A549 (cell line): ENCODE measurements at regions of chr2 and their contacts with region 1.

Region 1: DNA sequence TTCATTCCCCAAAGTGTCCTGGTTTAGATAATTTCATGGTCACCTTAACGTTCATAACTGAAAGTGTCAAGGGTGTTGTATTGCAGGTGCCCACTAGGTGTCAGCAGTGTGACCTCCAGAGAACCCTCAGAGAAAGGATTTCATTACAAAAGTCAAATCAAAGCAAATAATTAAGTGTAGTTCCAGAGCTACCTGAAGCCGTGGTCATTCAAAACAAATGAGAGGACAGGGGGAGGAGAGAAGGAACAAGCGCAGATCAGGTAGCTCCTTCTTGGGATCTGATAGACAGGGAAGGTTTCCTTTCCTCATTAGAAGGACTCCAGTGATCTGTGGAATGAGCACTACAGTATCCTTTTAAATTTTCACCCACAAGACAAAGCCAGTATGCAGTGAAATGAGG is at the start of gene SLC9A4:
- DNase-seq: peak; percentile 8 to 51
- ATAC-seq: peak; percentile 66 to 75; a peak in 4 of 6 replicates
- H3K4me3 ChIP-seq: no peak within 1 kb of the TSS
- H3K27ac ChIP-seq: no peak within 1 kb of the TSS
- H3K4me1 ChIP-seq: no peaks in the 10 kb centered on the region
- CTCF ChIP-seq: peak; percentile 89
- EP300 ChIP-seq: no peak
- POLR2A ChIP-seq: no peak
- RAD21 ChIP-seq: peak; percentile 80 to 81
- polyA plus RNA-seq, gene SLC9A4: not detected in 2 replicates

Region 2: DNA sequence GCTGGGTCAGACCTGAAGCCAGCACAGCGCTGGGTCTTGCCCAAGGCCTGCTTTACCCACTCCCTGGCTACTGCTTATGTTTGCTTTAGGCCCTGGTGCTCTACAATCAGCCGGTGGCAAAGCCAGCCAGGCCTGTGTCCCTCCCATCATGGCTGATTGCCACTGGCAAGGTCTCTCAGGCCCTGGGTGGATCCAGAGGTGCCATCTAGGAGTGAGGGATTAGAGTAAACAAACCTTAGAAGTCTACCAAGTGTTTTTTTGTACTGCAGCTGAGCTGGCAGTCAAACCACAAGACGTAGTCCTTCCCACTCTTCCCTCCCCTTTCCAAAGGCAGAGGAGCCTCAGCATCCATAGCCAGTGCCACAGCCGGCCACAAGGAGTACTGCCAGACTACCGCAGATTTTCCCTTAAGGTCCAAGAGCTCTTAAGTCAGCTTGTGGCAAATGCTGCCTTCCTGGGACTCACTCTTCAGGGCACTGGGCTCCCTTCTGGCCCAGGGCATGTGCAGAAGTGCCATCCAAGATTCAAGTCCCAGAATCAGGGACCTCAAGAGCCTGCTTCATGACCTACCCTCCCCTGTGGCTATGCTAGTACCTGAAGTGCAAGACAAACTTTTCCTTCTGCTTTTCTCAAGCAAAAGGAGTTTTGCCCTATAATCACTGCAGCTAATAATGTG is 266.2 kb before region 1 on chr2:
- CTCF ChIA-PET with region 1: no interaction called
- POLR2A ChIA-PET with region 1: no interaction called
- DNase-seq: no peak
- ATAC-seq: no peak
- H3K4me3 ChIP-seq: no peak overlapping the region
- H3K27ac ChIP-seq: no peak overlapping the region
- H3K4me1 ChIP-seq: no peaks in the 10 kb centered on the region
- CTCF ChIP-seq: no peak
- EP300 ChIP-seq: no peak
- POLR2A ChIP-seq: no peak
- RAD21 ChIP-seq: no peak

Region 3: DNA sequence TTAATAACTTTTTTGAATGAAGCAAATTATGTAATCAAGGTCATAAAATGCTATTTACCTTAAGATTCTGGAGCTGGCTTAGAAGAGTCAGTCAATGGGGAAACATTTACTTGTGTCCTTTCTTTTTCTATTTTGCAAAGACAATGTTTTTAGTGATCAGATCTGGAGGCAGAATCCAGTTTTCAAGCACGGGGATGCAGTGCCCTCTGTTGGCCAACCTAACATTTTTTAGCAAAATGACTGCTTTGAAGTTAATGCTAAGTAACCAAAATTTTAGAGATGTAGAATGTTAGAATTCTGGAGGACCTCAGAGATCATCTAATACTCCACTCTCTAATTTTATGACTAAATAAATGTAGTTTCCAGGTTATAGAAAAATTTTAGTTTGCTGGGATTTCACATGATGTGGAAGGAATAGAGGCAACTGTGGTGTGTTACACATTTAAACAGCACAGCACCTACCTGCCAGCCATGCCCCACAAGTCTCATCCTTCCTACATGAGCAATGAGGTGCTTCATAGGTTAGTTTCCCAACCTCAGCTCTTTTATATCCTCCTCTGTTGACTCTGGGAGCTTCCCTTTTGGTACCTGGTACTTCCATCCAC is 23.5 kb before region 1 on chr2:
- CTCF ChIA-PET with region 1: interaction called, 11 read pairs
- POLR2A ChIA-PET with region 1: no interaction called
- DNase-seq: peak; percentile 28 to 42
- ATAC-seq: peak in 1 of 2 experiments; percentile 66; a peak in 4 of 6 replicates
- H3K4me3 ChIP-seq: no peak overlapping the region
- H3K27ac ChIP-seq: no peak overlapping the region
- H3K4me1 ChIP-seq: no peaks in the 10 kb centered on the region
- CTCF ChIP-seq: peak; percentile 90
- EP300 ChIP-seq: no peak
- POLR2A ChIP-seq: no peak
- RAD21 ChIP-seq: peak; percentile 82 to 83

Region 4: GRCh38 chr2:102487761-102488466 is 14.9 kb after region 1 on chr2:
- CTCF ChIA-PET with region 1: interaction called, 37 read pairs
- POLR2A ChIA-PET with region 1: no interaction called
- DNase-seq: no peak
- ATAC-seq: no peak
- H3K4me3 ChIP-seq: no peak overlapping the region
- H3K27ac ChIP-seq: no peak overlapping the region
- H3K4me1 ChIP-seq: no peaks in the 10 kb centered on the region
- CTCF ChIP-seq: no peak
- EP300 ChIP-seq: no peak
- POLR2A ChIP-seq: no peak
- RAD21 ChIP-seq: no peak

Region 5: DNA sequence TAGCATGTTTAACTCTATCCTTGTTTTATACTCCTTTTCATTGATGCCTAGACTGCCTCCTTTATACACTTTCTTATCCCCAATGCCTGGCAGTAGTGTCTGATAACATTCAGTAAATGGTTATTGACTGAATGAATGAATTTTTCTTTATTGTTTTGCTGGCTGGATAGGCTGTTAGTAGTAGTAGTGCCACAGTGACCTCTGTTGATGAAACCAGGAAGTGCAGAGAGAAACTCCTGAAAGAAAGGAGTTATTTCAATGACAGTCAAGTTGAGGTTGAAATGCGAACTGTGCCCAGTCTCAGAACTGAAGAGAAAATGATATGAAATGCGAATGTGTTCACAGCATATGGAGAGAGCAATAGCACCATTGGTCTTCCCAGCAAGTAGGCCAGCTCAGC is 119.6 kb after region 1 on chr2:
- CTCF ChIA-PET with region 1: interaction called, 13 read pairs
- POLR2A ChIA-PET with region 1: no interaction called
- DNase-seq: peak in 1 of 2 experiments; percentile 6
- ATAC-seq: no peak
- H3K4me3 ChIP-seq: no peak overlapping the region
- H3K27ac ChIP-seq: no peak overlapping the region
- H3K4me1 ChIP-seq: no peaks in the 10 kb centered on the region
- CTCF ChIP-seq: peak; percentile 39
- EP300 ChIP-seq: no peak
- POLR2A ChIP-seq: no peak
- RAD21 ChIP-seq: peak; percentile 29 to 49; a peak in 4 of 5 replicates

Region 6: GRCh38 chr2:102703748-102704147 is 230.7 kb after region 1 on chr2:
- CTCF ChIA-PET with region 1: interaction called, 52 read pairs
- POLR2A ChIA-PET with region 1: no interaction called
- DNase-seq: peak; percentile 47 to 55
- ATAC-seq: peak; percentile 83 to 93
- H3K4me3 ChIP-seq: no peak overlapping the region
- H3K27ac ChIP-seq: no peak overlapping the region
- H3K4me1 ChIP-seq: peaks cover 9% of the 10 kb centered on the region
- CTCF ChIP-seq: peak; percentile 72
- EP300 ChIP-seq: no peak
- POLR2A ChIP-seq: no peak
- RAD21 ChIP-seq: peak; percentile 76 to 78

Region 7: GRCh38 chr2:102771114-102771513 is 298.1 kb after region 1 on chr2:
- CTCF ChIA-PET with region 1: no interaction called
- POLR2A ChIA-PET with region 1: no interaction called
- DNase-seq: no peak
- ATAC-seq: no peak
- H3K4me3 ChIP-seq: no peak overlapping the region
- H3K27ac ChIP-seq: no peak overlapping the region
- H3K4me1 ChIP-seq: no peaks in the 10 kb centered on the region
- CTCF ChIP-seq: no peak
- EP300 ChIP-seq: no peak
- POLR2A ChIP-seq: no peak
- RAD21 ChIP-seq: no peak